Psoas muscle (tissue), 8 donors: ENCODE measurements at regions of chr4 and their contacts with region 1.

Region 1: GRCh38 chr4:158722917-158723793 is at the start of gene PPID:
- DNase-seq: peak; percentile 86 to 94
- ATAC-seq: peak; percentile 97 to 99 (median 98)
- H3K4me3 ChIP-seq: peak within 1 kb of the TSS; percentile 98
- H3K27ac ChIP-seq: peak within 1 kb of the TSS; percentile 96
- H3K4me1 ChIP-seq: peaks cover 19% of the 10 kb centered on the region
- H3K27me3 ChIP-seq: no peaks in the 10 kb centered on the region
- CTCF ChIP-seq: no peak
- total RNA-seq, gene PPID: 35.1 to 68.1 (median 51.0) TPM

Region 2: GRCh38 chr4:158229768-158230167 is 493.4 kb before region 1 on chr4:
- intact Hi-C with region 1: no loop called
- DNase-seq: no peak
- ATAC-seq: no peak
- H3K4me3 ChIP-seq: no peak overlapping the region
- H3K27ac ChIP-seq: no peak overlapping the region
- H3K4me1 ChIP-seq: no peaks in the 10 kb centered on the region
- H3K27me3 ChIP-seq: no peaks in the 10 kb centered on the region
- CTCF ChIP-seq: no peak

Region 3: DNA sequence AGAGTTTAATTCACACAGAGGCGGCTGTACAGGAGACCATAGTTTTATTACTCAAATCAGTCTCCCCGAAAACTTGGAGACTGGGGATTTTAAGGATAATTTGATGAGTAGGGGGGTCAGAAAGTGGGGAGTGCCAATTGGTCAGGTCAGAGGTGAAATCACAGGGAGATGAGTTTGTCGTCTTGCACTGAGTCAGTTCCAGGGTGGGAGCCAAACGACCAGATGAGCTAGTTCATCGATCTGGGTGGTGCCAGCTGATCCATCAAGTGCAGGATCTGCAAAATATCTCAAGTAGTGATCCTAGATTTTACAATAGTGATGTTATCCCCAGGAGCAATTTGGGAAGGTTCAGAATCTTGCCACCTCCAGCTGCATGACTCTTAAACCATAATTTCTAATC is 47.1 kb before region 1 on chr4:
- intact Hi-C with region 1: loop called in 1 of 2 experiments (anchors 5 kb)
- DNase-seq: no peak
- ATAC-seq: no peak
- H3K4me3 ChIP-seq: no peak overlapping the region
- H3K27ac ChIP-seq: no peak overlapping the region
- H3K4me1 ChIP-seq: peaks cover 24% of the 10 kb centered on the region
- H3K27me3 ChIP-seq: no peaks in the 10 kb centered on the region
- CTCF ChIP-seq: no peak

Region 4: GRCh38 chr4:159334461-159334860 is 611.3 kb after region 1 on chr4:
- intact Hi-C with region 1: loop called in 1 of 2 experiments (anchors 10 kb)
- DNase-seq: no peak
- ATAC-seq: peak; percentile 79 to 92 (median 82)
- H3K4me3 ChIP-seq: no peak overlapping the region
- H3K27ac ChIP-seq: peak overlapping the region; percentile 73
- H3K4me1 ChIP-seq: peaks cover 7% of the 10 kb centered on the region
- H3K27me3 ChIP-seq: no peaks in the 10 kb centered on the region
- CTCF ChIP-seq: no peak

Region 5: DNA sequence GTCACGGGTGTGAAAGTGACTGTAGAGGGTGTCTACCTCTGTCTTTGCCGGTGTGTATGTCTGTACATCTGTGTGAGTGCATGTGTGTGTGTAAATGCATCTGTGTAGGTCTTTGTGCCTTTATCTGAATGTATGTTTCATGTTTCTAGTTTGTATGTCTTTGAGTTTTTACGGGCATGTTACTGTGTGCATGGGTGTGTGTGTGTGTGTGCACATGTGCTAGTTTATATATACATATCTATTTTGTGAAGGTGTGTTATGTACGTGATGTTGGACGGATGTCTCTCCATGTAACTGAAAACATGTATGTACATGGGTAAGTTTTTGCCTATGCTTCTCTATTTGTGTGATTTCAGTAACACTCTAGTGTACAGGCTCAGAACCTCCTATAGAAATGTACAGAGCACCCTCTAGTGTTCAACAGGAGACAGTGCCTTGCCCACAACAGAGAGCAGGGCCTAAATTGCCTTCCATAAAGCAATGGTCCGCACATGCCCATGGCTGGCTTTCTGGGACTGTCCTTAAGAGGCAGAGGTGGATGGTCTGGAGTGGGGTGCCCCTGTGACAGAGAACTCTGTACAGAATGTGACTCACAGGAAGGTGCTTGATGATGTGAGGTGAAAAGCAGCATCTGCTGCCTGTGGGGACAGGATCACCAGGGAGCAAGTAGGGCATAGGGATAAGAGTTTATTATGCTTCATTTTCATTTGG is 723.3 kb after region 1 on chr4:
- intact Hi-C with region 1: loop called in 1 of 2 experiments (anchors 10 kb)
- DNase-seq: no peak
- ATAC-seq: peak; percentile 87 to 99 (median 96)
- H3K4me3 ChIP-seq: no peak overlapping the region
- H3K27ac ChIP-seq: no peak overlapping the region
- H3K4me1 ChIP-seq: no peaks in the 10 kb centered on the region
- H3K27me3 ChIP-seq: no peaks in the 10 kb centered on the region
- CTCF ChIP-seq: peak; percentile 89